IMR-90 (cell line): ENCODE measurements at regions of chr2 and their contacts with region 1.

Region 1: DNA sequence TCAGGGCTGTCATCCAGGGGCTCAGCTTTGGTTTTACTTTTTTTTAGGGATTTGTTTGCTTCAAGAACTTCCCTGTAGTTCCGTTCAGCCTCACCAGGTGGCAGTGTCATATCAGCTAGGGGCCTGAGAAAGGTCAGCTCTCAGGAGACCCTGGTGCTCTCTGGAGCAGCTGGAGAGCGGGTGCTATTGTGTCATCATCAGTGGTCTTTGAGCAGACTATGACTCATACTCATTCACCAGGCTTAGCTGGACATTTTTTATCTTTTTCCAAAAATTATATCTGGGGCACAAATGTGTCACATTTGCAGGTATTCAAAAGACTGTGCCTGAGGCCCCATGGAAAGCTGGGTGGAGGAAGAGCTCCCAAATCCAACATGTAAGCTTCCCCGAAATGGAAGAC is 24.4 kb downstream of the ZNF892 start:
- DNase-seq: peak; percentile 55
- ATAC-seq: peak; percentile 61
- H3K4me3 ChIP-seq: no peak overlapping the region
- H3K27ac ChIP-seq: no peak overlapping the region
- H3K4me1 ChIP-seq: no peaks in the 10 kb centered on the region
- H3K27me3 ChIP-seq: no peaks in the 10 kb centered on the region
- CTCF ChIP-seq: peak; percentile 49
- POLR2A ChIP-seq: no peak
- RAD21 ChIP-seq: peak; percentile 55

Region 2: DNA sequence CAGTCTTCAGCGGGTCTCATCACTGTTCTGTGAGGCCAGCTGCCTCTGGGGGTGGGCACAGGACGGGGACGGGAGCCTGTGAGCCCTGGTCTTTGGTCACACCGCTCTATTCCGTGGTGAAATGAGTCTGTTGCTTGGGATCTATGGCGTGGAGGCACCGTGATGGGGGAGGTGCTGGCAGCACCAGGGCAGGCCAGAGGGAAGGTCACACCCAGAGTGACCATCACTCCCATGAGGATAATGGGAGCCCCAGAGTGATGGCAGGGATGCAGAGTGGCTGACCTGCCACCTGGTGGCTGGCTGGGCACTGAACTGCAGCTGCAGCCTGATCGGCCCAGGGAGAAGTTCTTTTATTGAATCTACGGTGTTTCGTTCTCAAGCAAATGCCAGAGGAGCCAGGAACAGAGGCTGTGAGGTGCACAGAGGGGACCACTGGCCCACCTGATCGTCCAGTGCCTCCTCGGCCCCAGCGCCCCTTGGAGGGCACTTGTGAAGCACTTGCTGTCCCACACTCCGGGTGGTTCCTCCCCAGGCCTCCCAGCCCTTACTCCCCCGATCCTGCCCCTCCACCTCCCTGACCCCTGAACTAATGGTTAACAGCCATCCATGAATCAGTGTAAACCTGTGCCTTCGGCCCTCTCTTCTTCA is 83.4 kb after region 1 on chr2:
- CTCF ChIA-PET with region 1: interaction called, 3 read pairs
- POLR2A ChIA-PET with region 1: no interaction called
- dilution Hi-C with region 1: no loop called
- in situ Hi-C with region 1: no loop called
- intact Hi-C with region 1: loop called (anchors 1 kb)
- DNase-seq: peak; percentile 7
- ATAC-seq: peak; percentile 40; the same call in 1 of the 2 replicates
- H3K4me3 ChIP-seq: no peak overlapping the region
- H3K27ac ChIP-seq: no peak overlapping the region
- H3K4me1 ChIP-seq: peaks cover 9% of the 10 kb centered on the region; the same call in 1 of the 2 replicates
- H3K27me3 ChIP-seq: peaks cover 5% of the 10 kb centered on the region; the same call in 1 of the 2 replicates
- CTCF ChIP-seq: peak; percentile 46
- POLR2A ChIP-seq: no peak
- RAD21 ChIP-seq: peak; percentile 38

Region 3: GRCh38 chr2:95333888-95334338 is 102.2 kb after region 1 on chr2:
- CTCF ChIA-PET with region 1: interaction called, 10 read pairs
- POLR2A ChIA-PET with region 1: no interaction called
- dilution Hi-C with region 1: no loop called
- in situ Hi-C with region 1: no loop called
- intact Hi-C with region 1: no loop called
- DNase-seq: peak; percentile 97
- ATAC-seq: peak; percentile 84
- H3K4me3 ChIP-seq: no peak overlapping the region
- H3K27ac ChIP-seq: no peak overlapping the region
- H3K4me1 ChIP-seq: peaks cover 11% of the 10 kb centered on the region
- H3K27me3 ChIP-seq: peaks cover 5% of the 10 kb centered on the region
- CTCF ChIP-seq: no peak
- POLR2A ChIP-seq: no peak
- RAD21 ChIP-seq: no peak